ENCODE measurements at regions of chr21 and their contacts with region 1.

Region 1: GRCh38 chr21:42973991-42974831 is at the start of gene PKNOX1:
- DNase-seq: peak; percentile 99
- H3K4me3 ChIP-seq: peak within 1 kb of the TSS; percentile 63
- H3K4me3 Mint-ChIP-seq: peak within 1 kb of the TSS; percentile 80
- H3K27ac Mint-ChIP-seq: peak within 1 kb of the TSS; percentile 88
- H3K4me1 ChIP-seq: peaks cover 53% of the 10 kb centered on the region
- H3K4me1 Mint-ChIP-seq: peaks cover 18% of the 10 kb centered on the region
- H3K27me3 ChIP-seq: no peaks in the 10 kb centered on the region
- H3K27me3 Mint-ChIP-seq: no peaks in the 10 kb centered on the region
- CTCF ChIP-seq: no peak
- total RNA-seq, gene PKNOX1: 10.7 TPM in 2 replicates

Region 2: DNA sequence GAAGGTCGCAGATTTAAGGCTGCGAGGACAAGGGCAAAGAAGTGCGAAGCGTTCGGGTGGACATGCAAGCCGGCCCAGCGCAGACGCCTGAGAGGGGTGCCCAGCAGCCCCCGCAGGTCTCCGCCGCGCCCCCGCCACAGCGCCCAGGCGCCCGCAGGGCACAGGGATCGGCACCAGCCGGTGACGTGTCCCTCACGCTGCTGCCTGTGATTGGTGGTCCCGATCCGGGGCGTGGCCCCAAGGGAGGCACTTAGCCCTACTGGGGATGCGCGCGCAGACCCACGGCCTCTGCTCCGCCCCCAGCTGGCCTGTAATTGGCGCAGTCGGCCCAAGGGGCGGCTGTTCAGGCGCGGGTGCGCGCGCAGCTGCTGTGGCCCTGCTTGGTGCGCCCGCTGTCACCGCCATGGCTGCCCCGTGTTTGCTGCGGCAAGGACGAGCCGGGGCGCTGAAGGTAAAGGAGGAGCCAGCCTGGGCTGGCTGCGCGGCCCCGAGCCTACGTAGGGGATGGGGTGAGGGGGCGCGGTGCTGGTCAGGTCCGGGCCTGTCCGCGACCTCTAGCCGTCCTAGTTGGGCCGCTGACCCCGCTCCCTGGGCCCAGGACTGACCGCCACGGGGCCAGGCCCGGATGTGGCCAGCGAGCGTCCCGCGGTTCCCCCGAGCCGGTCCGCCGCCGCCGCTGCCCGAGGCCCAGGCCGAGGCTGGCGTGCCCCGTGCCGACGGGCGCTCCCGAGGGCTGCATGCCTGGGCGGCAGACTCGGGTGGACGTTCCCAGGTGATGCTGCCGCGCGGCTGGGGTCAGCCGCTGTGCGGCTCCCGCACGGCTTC is 81.1 kb before region 1 on chr21 and contains the start of gene NDUFV3:
- CTCF ChIA-PET with region 1: no interaction called
- POLR2A ChIA-PET with region 1: interaction called, 14 read pairs
- intact Hi-C with region 1: no loop called
- DNase-seq: peak; percentile 98 to 99
- H3K4me3 ChIP-seq: peak within 1 kb of the TSS; percentile 92
- H3K4me3 Mint-ChIP-seq: peak within 1 kb of the TSS; percentile 90
- H3K27ac Mint-ChIP-seq: peak within 1 kb of the TSS; percentile 92
- H3K4me1 ChIP-seq: no peaks in the 10 kb centered on the region
- H3K4me1 Mint-ChIP-seq: no peaks in the 10 kb centered on the region
- H3K27me3 ChIP-seq: no peaks in the 10 kb centered on the region
- H3K27me3 Mint-ChIP-seq: no peaks in the 10 kb centered on the region
- CTCF ChIP-seq: no peak
- total RNA-seq, gene NDUFV3: 32.5 and 33.8 TPM in 2 replicates

Region 3: DNA sequence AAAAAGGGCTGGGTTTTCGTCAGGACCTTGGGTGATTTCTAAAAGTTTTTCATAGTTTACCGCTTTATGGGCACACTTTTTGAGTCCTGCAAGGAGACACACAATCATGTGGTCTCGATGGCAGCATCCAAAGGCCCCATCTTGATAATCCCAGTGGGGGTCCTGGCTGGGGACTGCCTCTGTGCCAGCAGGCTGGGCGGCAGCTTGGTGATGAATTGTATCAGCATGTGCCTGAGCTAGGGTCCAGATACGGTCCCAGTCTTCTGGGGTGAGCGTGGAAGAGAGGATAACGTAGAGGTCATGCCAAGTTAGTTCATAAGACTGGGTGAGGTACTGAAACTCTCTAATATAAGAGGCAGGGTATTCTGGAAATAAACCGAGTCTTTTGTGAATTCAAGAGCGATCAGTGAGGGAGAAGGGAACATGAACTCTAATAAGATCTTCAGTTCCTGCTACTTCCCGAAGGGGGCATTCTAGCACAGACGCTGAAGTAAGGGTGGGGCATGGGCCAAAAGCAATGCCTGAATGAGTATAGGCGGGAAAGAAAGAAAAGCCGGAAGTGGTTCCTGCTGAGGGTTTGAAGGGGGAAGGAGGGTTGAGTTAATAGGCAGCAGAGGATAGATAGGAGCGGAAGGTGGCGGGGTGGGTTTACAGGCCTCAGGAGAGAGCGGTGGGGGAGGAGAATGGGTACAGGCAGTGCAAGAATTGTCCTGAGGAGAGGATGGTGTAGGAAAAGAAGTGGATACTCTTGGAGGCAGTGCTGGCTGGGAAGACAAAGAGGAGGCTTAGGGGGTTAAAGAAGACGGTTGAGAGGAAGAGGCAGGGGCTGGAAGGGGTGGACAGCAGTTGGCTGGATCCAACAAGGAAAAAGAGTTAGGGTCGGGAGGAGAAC is 50.4 kb before region 1 on chr21:
- CTCF ChIA-PET with region 1: interaction called, 4 read pairs
- POLR2A ChIA-PET with region 1: interaction called, 5 read pairs
- intact Hi-C with region 1: loop called (anchors 2 kb)
- DNase-seq: peak; percentile 87 to 92
- H3K4me3 ChIP-seq: peak overlapping the region; percentile 28
- H3K4me3 Mint-ChIP-seq: peak overlapping the region; percentile 83
- H3K27ac Mint-ChIP-seq: peak overlapping the region; percentile 88
- H3K4me1 ChIP-seq: peaks cover 24% of the 10 kb centered on the region
- H3K4me1 Mint-ChIP-seq: peaks cover 11% of the 10 kb centered on the region
- H3K27me3 ChIP-seq: no peaks in the 10 kb centered on the region
- H3K27me3 Mint-ChIP-seq: no peaks in the 10 kb centered on the region
- CTCF ChIP-seq: peak; percentile 75 to 80

Region 4: GRCh38 chr21:42931576-42932258 is 42.5 kb before region 1 on chr21:
- CTCF ChIA-PET with region 1: no interaction called
- POLR2A ChIA-PET with region 1: interaction called, 5 read pairs
- intact Hi-C with region 1: loop called (anchors 2 kb)
- DNase-seq: peak; percentile 24 to 44
- H3K4me3 ChIP-seq: peak overlapping the region; percentile 47
- H3K4me3 Mint-ChIP-seq: peak overlapping the region; percentile 97
- H3K27ac Mint-ChIP-seq: peak overlapping the region; percentile 99
- H3K4me1 ChIP-seq: peaks cover 45% of the 10 kb centered on the region
- H3K4me1 Mint-ChIP-seq: peaks cover 22% of the 10 kb centered on the region
- H3K27me3 ChIP-seq: no peaks in the 10 kb centered on the region
- H3K27me3 Mint-ChIP-seq: no peaks in the 10 kb centered on the region
- CTCF ChIP-seq: no peak

Region 5: GRCh38 chr21:42937960-42938605 is 36.1 kb before region 1 on chr21:
- CTCF ChIA-PET with region 1: no interaction called
- POLR2A ChIA-PET with region 1: interaction called, 17 read pairs
- intact Hi-C with region 1: loop called (anchors 1 kb)
- DNase-seq: no peak
- H3K4me3 ChIP-seq: no peak overlapping the region
- H3K4me3 Mint-ChIP-seq: peak overlapping the region; percentile 72
- H3K27ac Mint-ChIP-seq: peak overlapping the region; percentile 83
- H3K4me1 ChIP-seq: peaks cover 59% of the 10 kb centered on the region
- H3K4me1 Mint-ChIP-seq: peaks cover 43% of the 10 kb centered on the region
- H3K27me3 ChIP-seq: no peaks in the 10 kb centered on the region
- H3K27me3 Mint-ChIP-seq: no peaks in the 10 kb centered on the region
- CTCF ChIP-seq: no peak

Region 6: DNA sequence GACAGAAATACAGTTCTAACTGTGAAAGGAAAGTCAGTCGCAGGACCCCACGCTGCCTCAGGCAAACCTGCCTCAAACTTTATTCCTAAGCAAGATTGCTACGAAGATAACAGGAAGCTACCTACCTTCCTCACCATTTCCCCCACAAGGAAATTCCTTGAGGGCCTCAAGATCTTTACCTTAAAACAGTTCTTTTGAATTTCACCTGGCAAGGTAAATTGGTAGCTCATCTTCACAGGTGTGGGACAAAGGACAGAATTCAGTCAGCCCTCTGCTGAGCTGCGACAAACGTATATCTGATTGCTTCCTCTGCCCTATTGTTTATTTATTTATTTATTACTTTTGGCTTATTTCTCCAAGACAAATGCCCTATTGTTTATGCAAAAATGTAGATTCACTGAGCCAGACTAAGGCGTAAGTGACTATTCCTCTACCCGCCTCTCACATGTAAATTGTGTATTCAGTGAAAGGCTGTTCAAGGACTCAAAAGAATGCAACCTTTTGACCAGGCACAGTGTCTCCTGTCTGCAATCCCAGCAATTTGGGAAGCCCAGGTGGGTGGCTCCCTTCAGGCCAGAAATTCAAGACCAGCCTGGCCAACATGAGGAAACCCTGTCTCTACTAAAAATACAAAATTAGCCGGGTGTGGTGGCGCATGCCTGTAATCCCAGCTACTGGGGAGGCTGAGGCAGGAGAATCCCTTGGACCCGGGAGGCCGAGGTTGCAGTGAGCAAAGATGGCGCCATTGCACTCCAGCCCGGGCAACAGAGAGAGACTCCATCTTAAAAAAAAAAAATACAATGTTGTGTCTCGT is 17.2 kb before region 1 on chr21:
- CTCF ChIA-PET with region 1: interaction called, 4 read pairs
- POLR2A ChIA-PET with region 1: interaction called, 24 read pairs
- intact Hi-C with region 1: loop called (anchors 1 kb)
- DNase-seq: peak; percentile 53 to 69
- H3K4me3 ChIP-seq: no peak overlapping the region
- H3K4me3 Mint-ChIP-seq: peak overlapping the region; percentile 25
- H3K27ac Mint-ChIP-seq: peak overlapping the region; percentile 91
- H3K4me1 ChIP-seq: peaks cover 27% of the 10 kb centered on the region
- H3K4me1 Mint-ChIP-seq: peaks cover 17% of the 10 kb centered on the region
- H3K27me3 ChIP-seq: no peaks in the 10 kb centered on the region
- H3K27me3 Mint-ChIP-seq: no peaks in the 10 kb centered on the region
- CTCF ChIP-seq: no peak

Region 7: GRCh38 chr21:44083631-44084291 is 1109.5 kb after region 1 on chr21:
- CTCF ChIA-PET with region 1: no interaction called
- POLR2A ChIA-PET with region 1: no interaction called
- intact Hi-C with region 1: no loop called
- DNase-seq: no peak
- H3K4me3 ChIP-seq: no peak overlapping the region
- H3K4me3 Mint-ChIP-seq: no peak overlapping the region
- H3K27ac Mint-ChIP-seq: no peak overlapping the region
- H3K4me1 ChIP-seq: peaks cover 19% of the 10 kb centered on the region; the same call in 1 of the 2 replicates
- H3K4me1 Mint-ChIP-seq: peaks cover 15% of the 10 kb centered on the region
- H3K27me3 ChIP-seq: no peaks in the 10 kb centered on the region
- H3K27me3 Mint-ChIP-seq: no peaks in the 10 kb centered on the region
- CTCF ChIP-seq: no peak